GM13977 (cell line): ENCODE measurements at regions of chr19 and their contacts with region 1.

Region 1: DNA sequence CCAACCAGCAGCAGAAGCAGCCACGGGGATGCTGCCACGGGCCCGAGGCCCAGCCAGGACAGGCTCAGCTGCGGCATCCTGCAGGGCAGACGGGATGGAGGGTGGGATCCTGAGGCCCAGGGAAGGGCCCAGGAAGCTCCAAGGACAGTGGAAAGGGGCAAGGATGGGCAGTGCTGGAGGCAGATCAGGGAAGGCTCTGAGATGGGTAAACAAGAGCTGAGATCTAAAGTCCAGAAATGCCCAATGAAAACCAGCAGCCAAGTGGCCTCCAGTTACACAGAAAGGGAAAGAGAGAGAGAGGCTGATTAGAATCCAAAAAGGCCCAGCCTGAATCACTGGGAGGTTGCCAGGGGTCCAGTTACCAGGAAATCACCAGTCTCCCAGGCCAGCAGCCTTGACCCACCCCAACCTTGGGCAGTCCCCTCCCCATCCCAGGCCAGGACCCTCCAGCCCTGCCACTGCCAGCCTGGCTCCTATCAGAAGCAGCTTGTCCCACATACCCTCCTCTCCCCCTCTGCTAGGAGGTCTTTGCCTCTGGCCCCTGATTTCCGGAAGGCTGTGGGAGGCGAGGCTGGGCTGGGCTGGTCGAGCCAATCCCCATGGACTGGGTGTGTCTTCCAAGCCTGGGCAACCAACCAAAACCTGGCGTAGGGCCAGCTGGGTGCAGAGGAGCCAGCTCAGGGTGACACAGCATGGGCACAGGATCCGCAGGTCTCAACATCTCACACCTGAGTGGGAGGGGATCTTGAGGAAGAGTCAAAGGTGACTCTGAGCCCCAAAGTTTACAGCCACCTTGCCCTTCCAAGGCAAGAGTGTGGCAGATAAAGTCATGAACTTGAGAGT is at the start of gene CYP4F11:
- DNase-seq: no peak
- CTCF ChIP-seq: no peak

Region 2: DNA sequence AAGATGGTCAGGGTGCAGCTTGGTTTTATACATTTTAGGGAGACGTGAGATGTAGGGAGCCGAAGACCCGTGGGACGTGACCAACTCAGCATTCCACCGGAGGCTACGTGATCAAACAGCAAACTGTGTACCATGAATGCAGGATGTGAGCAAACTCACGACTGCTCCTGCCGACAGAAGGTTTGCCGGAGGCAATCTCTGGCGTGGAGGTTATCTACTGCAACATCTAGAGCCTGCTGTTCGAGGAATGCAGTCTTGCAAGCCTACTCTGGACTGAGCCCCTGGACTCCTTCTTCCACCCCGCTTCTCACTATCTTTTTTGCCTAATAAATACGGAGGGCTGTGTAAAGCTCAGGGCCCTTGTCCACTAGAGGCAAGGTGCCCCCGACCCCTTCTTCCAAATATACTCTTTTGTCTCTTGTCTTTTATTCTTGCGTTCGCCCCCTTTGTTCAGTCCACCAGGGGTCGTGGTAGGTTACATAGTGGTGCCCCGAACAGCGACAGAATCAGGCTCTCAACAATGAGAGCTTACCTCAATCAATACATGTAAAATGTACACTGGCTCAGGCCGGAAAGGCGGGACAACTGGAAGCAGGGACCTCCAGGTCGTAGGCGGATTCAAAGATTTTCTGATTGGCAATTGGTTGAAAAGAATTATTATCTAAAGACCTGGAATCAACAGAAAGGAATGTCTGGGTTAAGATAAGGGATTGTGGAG is 861.5 kb before region 1 on chr19:
- in situ Hi-C with region 1: loop called (anchors 25 kb)
- DNase-seq: no peak
- CTCF ChIP-seq: no peak

Region 3: GRCh38 chr19:15869109-15869555 is 65.4 kb before region 1 on chr19:
- in situ Hi-C with region 1: no loop called
- DNase-seq: peak; percentile 56
- CTCF ChIP-seq: peak; percentile 37